ENCODE measurements at regions of chr5 and their contacts with region 1.

Region 1: DNA sequence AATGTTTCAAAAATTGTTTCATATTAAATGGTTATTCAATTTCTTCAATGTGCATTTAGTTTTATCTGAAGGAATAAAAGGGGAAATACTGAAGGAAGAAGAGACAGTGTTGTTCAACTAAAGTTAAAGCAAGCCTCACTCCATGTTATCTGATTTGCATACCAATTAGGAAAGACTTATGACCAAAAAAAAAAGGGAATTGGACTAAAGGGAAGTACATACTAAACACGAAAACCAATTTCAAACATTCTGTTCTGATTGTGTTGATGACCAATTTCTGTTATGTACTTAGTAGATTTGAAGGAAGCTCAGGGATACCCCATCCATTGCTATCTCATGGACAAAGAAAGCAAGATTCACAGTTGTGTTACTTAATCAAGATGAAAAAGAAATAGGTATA is 4.9 kb upstream of the GAPT start:
- DNase-seq: no peak
- H3K27ac ChIP-seq: no peak overlapping the region
- CTCF ChIP-seq: no peak

Region 2: GRCh38 chr5:58439094-58439644 is 47.1 kb before region 1 on chr5:
- CTCF ChIA-PET with region 1: interaction called, 11 read pairs
- POLR2A ChIA-PET with region 1: no interaction called
- DNase-seq: no peak
- H3K27ac ChIP-seq: no peak overlapping the region
- CTCF ChIP-seq: no peak

Region 3: GRCh38 chr5:58666598-58667581 is 180.6 kb after region 1 on chr5:
- CTCF ChIA-PET with region 1: no interaction called
- POLR2A ChIA-PET with region 1: no interaction called
- DNase-seq: no peak
- H3K27ac ChIP-seq: no peak overlapping the region
- CTCF ChIP-seq: no peak

Measured in RWPE1 (cell line).